ENCODE measurements at regions of chr18 and their contacts with region 1.

Region 1: GRCh38 chr18:36284671-36285295 is 12.7 kb upstream of the FHOD3 start:
- DNase-seq: peak; percentile 52
- ATAC-seq: peak; percentile 44
- H3K4me3 Mint-ChIP-seq: no peak overlapping the region
- H3K27ac Mint-ChIP-seq: no peak overlapping the region
- H3K4me1 Mint-ChIP-seq: peaks cover 2% of the 10 kb centered on the region
- H3K27me3 Mint-ChIP-seq: peaks cover 18% of the 10 kb centered on the region

Region 2: DNA sequence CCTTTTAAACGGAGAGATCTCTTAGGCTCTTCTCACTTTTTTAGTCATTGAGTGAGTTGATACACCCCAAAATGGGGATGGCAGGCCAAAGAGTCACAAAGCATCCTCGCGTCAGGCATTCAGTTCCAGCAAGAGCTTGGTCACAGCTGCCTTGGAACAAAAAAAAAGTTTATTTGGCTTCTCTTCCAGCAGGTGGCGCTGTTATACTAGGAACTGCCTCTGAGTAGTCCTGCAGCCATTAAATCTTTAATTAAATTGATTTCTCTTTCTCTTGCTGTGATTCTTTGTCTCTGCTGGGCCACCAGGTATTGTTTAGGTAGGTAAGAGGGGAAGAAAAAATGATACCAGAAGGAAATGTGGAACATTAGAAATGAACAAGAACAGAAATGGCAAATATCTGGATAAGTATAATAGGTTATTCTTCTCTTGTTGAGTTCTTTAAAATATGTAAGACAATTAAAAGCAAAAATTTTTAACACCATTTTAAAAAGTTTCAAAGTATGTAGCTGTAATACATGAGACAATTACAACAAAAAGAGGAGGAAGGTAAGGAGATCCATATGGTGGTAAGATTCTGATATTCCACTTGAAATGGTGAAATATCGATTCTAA is 528.2 kb before region 1 on chr18:
- CTCF ChIA-PET with region 1: interaction called, 13 read pairs
- POLR2A ChIA-PET with region 1: no interaction called
- intact Hi-C with region 1: loop called (anchors 1 kb)
- DNase-seq: peak; percentile 72
- ATAC-seq: peak; percentile 68
- H3K4me3 Mint-ChIP-seq: no peak overlapping the region
- H3K27ac Mint-ChIP-seq: no peak overlapping the region
- H3K4me1 Mint-ChIP-seq: no peaks in the 10 kb centered on the region
- H3K27me3 Mint-ChIP-seq: peaks cover 8% of the 10 kb centered on the region

Region 3: GRCh38 chr18:35934002-35934401 is 350.8 kb before region 1 on chr18:
- CTCF ChIA-PET with region 1: no interaction called
- POLR2A ChIA-PET with region 1: no interaction called
- intact Hi-C with region 1: no loop called
- DNase-seq: no peak
- ATAC-seq: no peak
- H3K4me3 Mint-ChIP-seq: no peak overlapping the region
- H3K27ac Mint-ChIP-seq: no peak overlapping the region
- H3K4me1 Mint-ChIP-seq: no peaks in the 10 kb centered on the region
- H3K27me3 Mint-ChIP-seq: no peaks in the 10 kb centered on the region

Region 4: GRCh38 chr18:36015629-36016028 is 269.2 kb before region 1 on chr18:
- CTCF ChIA-PET with region 1: interaction called, 33 read pairs
- POLR2A ChIA-PET with region 1: no interaction called
- intact Hi-C with region 1: loop called (anchors 1 kb)
- DNase-seq: no peak
- ATAC-seq: no peak
- H3K4me3 Mint-ChIP-seq: no peak overlapping the region
- H3K27ac Mint-ChIP-seq: no peak overlapping the region
- H3K4me1 Mint-ChIP-seq: no peaks in the 10 kb centered on the region
- H3K27me3 Mint-ChIP-seq: no peaks in the 10 kb centered on the region

Region 5: DNA sequence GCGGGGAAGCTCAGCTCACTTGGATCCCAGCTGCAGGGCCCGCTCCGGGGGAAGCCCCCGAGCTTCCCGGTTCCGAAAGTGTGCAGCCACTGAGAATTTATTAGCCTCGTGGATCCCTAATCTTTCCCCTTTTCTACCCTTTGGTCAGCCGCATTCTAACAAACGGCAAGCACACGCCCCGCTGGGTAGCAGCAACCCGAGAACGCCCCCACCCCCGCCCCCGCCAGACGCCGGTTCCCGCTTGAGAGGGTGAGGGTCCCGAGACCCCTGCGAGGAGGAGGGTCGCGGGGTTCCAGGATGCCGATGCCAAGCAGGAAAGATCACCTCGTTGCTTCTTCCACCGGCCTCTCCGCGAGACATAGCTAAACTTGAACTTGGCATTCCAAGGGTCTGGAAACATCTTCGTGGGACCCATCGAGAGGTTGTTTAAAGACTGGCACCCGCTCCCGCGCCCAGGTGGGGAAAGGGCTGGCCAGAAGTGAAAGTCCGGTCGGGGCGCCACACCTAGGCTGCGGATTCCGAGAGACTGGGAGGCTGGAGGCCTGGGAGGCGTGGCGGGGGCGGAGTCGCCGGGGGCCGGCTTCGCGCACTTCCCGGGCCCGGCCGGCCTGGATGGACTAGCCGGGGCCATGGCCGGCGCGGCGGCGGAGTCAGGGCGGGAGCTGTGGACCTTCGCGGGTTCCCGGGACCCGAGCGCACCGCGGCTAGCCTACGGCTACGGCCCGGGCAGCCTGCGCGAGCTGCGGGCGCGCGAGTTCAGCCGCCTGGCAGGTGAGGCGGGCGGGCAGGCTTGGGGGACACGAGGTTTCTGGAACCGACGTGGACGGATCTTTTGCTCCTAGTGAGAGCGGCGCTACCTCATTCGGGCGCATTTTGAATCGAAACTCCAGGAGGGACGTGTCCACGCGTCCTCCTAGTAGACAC is 97.6 kb before region 1 on chr18 and contains the start of gene MOCOS:
- CTCF ChIA-PET with region 1: no interaction called
- POLR2A ChIA-PET with region 1: no interaction called
- intact Hi-C with region 1: loop called in 1 of 2 experiments (anchors 5 kb)
- DNase-seq: peak; percentile 53
- ATAC-seq: peak; percentile 63
- H3K4me3 Mint-ChIP-seq: peak within 1 kb of the TSS; percentile 66
- H3K27ac Mint-ChIP-seq: no peak within 1 kb of the TSS
- H3K4me1 Mint-ChIP-seq: peaks cover 6% of the 10 kb centered on the region
- H3K27me3 Mint-ChIP-seq: peaks cover 21% of the 10 kb centered on the region
- total RNA-seq, gene MOCOS: 0.07 to 0.11 TPM

Region 6: GRCh38 chr18:36241831-36242230 is 43.0 kb before region 1 on chr18:
- CTCF ChIA-PET with region 1: no interaction called
- POLR2A ChIA-PET with region 1: no interaction called
- intact Hi-C with region 1: no loop called
- DNase-seq: no peak
- ATAC-seq: no peak
- H3K4me3 Mint-ChIP-seq: no peak overlapping the region
- H3K27ac Mint-ChIP-seq: no peak overlapping the region
- H3K4me1 Mint-ChIP-seq: no peaks in the 10 kb centered on the region
- H3K27me3 Mint-ChIP-seq: peaks cover 31% of the 10 kb centered on the region

Measured in activated CD4-positive, alpha-beta T cell treated with anti-CD3 and anti-CD28 coated beads for 36 hours (primary cell).